H1 (cell line): ENCODE measurements at regions of chr9 and their contacts with region 1.

Region 1: GRCh38 chr9:72022841-72023240 is 37.6 kb downstream of the C9orf57 start:
- DNase-seq: no peak
- H3K4me3 ChIP-seq: no peak overlapping the region
- H3K27ac ChIP-seq: no peak overlapping the region
- H3K4me1 ChIP-seq: peaks cover 0 to 2% (median 0%) of the 10 kb centered on the region in 4 experiments; a peak in 1 of 7 replicates
- H3K27me3 ChIP-seq: no peaks in the 10 kb centered on the region
- CTCF ChIP-seq: no peak
- EP300 ChIP-seq: no peak
- POLR2A ChIP-seq: no peak
- RAD21 ChIP-seq: no peak

Region 2: DNA sequence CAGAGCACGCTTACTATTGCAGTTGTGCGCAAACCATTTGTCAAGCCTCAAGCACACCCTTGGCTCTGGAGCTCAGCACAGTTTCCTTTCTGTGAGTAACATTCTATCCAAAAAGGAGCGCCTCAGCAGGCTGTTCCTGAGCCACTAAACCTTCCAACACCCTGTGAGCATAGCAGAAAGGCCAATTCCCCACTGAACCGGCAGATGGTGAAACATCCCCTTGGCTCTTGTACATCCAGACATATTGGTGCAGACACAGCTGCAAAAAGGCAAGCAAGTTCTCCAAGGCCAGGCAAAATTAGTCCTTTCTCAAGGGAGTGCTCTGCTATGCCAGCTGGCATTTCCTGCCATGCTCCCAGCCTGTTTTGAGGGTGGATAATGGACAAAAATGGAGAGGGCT is 210.5 kb before region 1 on chr9:
- CTCF ChIA-PET with region 1: interaction called, 67 read pairs
- POLR2A ChIA-PET with region 1: no interaction called
- DNase-seq: no peak
- H3K4me3 ChIP-seq: no peak overlapping the region
- H3K27ac ChIP-seq: no peak overlapping the region
- H3K4me1 ChIP-seq: peaks cover 0 to 2% (median 0%) of the 10 kb centered on the region in 4 experiments; a peak in 1 of 7 replicates
- H3K27me3 ChIP-seq: no peaks in the 10 kb centered on the region
- CTCF ChIP-seq: no peak
- EP300 ChIP-seq: no peak
- POLR2A ChIP-seq: no peak
- RAD21 ChIP-seq: peak in 1 of 2 experiments; percentile 9; a peak in 1 of 4 replicates

Region 3: GRCh38 chr9:71985297-71985911 is 37.4 kb before region 1 on chr9:
- CTCF ChIA-PET with region 1: interaction called, 27 read pairs
- POLR2A ChIA-PET with region 1: interaction called, 3 read pairs
- DNase-seq: peak in 1 of 2 experiments; percentile 51
- H3K4me3 ChIP-seq: peak overlapping the region in 1 of 4 experiments; percentile 12; a peak in 1 of 8 replicates
- H3K27ac ChIP-seq: no peak overlapping the region
- H3K4me1 ChIP-seq: peaks cover 0 to 12% (median 6%) of the 10 kb centered on the region in 4 experiments
- H3K27me3 ChIP-seq: no peaks in the 10 kb centered on the region
- CTCF ChIP-seq: peak in 2 of 3 experiments; percentile 57 to 77; a peak in 2 of 4 replicates
- EP300 ChIP-seq: no peak
- POLR2A ChIP-seq: no peak
- RAD21 ChIP-seq: peak; percentile 66 to 73

Region 4: GRCh38 chr9:72048850-72049249 is 26.0 kb after region 1 on chr9:
- CTCF ChIA-PET with region 1: interaction called, 13 read pairs
- POLR2A ChIA-PET with region 1: no interaction called
- DNase-seq: no peak
- H3K4me3 ChIP-seq: no peak overlapping the region
- H3K27ac ChIP-seq: no peak overlapping the region
- H3K4me1 ChIP-seq: no peaks in the 10 kb centered on the region
- H3K27me3 ChIP-seq: no peaks in the 10 kb centered on the region
- CTCF ChIP-seq: no peak
- EP300 ChIP-seq: no peak
- POLR2A ChIP-seq: no peak
- RAD21 ChIP-seq: no peak